Spleen (tissue), 13 donors: ENCODE measurements at regions of chr4 and their contacts with region 1.

Region 1: GRCh38 chr4:41692717-41693345 is 55.7 kb downstream of the PHOX2B start:
- DNase-seq: no peak
- H3K4me3 ChIP-seq: no peak overlapping the region
- H3K27ac ChIP-seq: no peak overlapping the region
- H3K4me1 ChIP-seq: peaks cover 0 to 5% (median 0%) of the 10 kb centered on the region in 6 donors
- H3K27me3 ChIP-seq: no peaks in the 10 kb centered on the region
- CTCF ChIP-seq: peak; percentile 24 to 79 (median 57)
- POLR2A ChIP-seq: no peak

Region 2: DNA sequence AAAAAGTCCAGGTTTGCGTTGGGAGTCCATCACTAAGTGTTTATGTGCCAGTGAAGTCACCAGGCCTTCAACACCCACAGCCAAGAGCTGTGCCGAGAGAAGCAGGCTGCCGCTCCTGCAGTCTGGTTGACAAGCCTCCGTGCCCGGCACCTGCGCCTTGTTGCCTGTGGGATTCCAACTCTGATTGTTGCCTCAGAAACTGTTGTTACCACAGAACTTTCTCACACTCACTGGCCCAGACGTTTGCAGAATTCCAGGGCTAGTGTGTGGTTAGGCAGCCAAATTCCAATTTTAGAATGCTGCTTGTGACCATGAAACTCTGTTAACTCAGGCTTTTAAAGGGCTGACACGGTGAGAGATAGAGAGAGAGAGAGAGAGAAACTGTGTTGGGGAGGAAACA is 274.4 kb before region 1 on chr4:
- intact Hi-C with region 1: no loop called
- DNase-seq: no peak
- H3K4me3 ChIP-seq: no peak overlapping the region
- H3K27ac ChIP-seq: peak overlapping the region in 4 of 8 donors; percentile 29 to 56 (median 46)
- H3K4me1 ChIP-seq: peaks cover 0 to 4% (median 1%) of the 10 kb centered on the region in 6 donors
- H3K27me3 ChIP-seq: peaks cover 0 to 7% (median 0%) of the 10 kb centered on the region in 7 donors
- CTCF ChIP-seq: no peak
- POLR2A ChIP-seq: no peak

Region 3: DNA sequence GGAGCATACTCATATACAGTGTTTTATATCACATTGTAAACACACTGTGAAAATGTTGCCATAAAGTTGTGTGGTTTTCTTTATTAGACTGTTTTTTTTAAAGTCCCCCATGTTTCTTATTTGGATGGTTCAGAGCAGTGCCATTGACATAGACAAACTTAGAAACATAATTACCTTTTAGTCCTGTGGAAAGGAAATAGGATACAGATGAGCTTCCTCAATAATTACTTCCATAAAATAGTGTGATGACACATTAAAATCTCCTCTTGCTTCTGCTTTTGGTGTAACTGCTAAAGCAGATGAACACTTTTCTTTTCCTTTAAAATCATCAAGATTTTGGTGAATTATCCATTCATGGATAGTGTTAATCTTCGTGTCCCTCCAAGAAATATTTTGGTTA is 207.8 kb before region 1 on chr4:
- intact Hi-C with region 1: no loop called
- DNase-seq: no peak
- H3K4me3 ChIP-seq: no peak overlapping the region
- H3K27ac ChIP-seq: no peak overlapping the region
- H3K4me1 ChIP-seq: no peaks in the 10 kb centered on the region
- H3K27me3 ChIP-seq: no peaks in the 10 kb centered on the region
- CTCF ChIP-seq: no peak
- POLR2A ChIP-seq: no peak

Region 4: GRCh38 chr4:41882625-41883347 is 190.0 kb after region 1 on chr4:
- intact Hi-C with region 1: loop called (anchors 5 kb)
- DNase-seq: peak; percentile 89
- H3K4me3 ChIP-seq: peak overlapping the region; percentile 17 to 64 (median 40)
- H3K27ac ChIP-seq: no peak overlapping the region
- H3K4me1 ChIP-seq: peaks cover 14 to 59% (median 30%) of the 10 kb centered on the region in 6 donors
- H3K27me3 ChIP-seq: peaks cover 3 to 94% (median 48%) of the 10 kb centered on the region in 7 donors
- CTCF ChIP-seq: peak; percentile 37 to 93 (median 84)
- POLR2A ChIP-seq: no peak